CD8-positive, alpha-beta T cell (primary cell): ENCODE measurements at regions of chr11 and their contacts with region 1.

Region 1: GRCh38 chr11:46700241-46701077 is at the starts of genes ARHGAP1 and ZNF408:
- DNase-seq: peak; percentile 98 to 100 (median 99)
- ATAC-seq: peak; percentile 97
- H3K4me3 ChIP-seq: peak within 1 kb of the TSS; percentile 79 to 92
- H3K4me3 Mint-ChIP-seq: peak within 1 kb of the TSS; percentile 99
- H3K27ac ChIP-seq: peak within 1 kb of the TSS; percentile 73 to 82
- H3K27ac Mint-ChIP-seq: peak within 1 kb of the TSS; percentile 96
- H3K4me1 ChIP-seq: peaks cover 57% of the 10 kb centered on the region
- H3K4me1 Mint-ChIP-seq: peaks cover 53% of the 10 kb centered on the region
- H3K27me3 ChIP-seq: no peaks in the 10 kb centered on the region
- H3K27me3 Mint-ChIP-seq: no peaks in the 10 kb centered on the region
- CTCF ChIP-seq: no peak
- total RNA-seq, gene ARHGAP1: 33.4 to 36.9 TPM
- total RNA-seq, gene ZNF408: 24.0 to 24.3 TPM

Region 2: DNA sequence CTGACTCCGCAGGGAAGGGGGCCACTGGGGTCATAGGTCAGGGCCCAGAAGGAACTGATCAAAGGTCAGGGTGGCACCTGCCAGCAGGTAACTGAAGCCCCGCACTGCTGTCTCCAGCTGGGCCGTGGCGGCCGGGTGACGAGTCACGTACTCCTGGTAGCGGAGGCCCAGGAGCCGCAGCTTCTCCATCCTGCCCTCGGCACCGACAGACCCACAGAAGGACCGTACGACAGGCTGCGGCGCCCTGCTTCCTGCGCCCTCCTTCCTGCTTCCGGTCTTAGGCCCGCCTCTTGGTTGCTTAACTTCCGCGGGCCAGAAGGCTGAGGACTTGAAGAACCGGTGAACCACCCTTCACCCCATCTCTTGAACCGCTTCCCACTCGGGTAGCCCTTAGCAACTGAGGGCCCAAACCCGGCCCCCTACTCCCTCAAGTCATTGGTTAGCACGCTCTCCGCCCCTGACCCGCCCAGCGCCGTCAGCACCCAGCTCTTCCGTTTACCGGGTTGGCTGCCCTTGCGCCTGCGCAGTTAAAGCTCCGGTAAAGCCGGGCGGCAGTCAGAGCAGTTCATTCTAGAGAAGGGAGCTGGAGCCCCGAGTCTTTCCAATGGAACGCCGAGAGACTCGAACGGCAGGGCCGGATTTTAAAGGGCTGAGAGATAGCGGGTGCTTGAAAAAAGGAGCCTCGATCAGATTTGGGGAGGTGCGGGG is 782.7 kb before region 1 on chr11 and contains the start of gene PEX16:
- CTCF ChIA-PET with region 1: no interaction called
- POLR2A ChIA-PET with region 1: no interaction called
- intact Hi-C with region 1: loop called in 1 of 2 experiments (anchors 5 kb)
- DNase-seq: peak; percentile 90 to 99 (median 94)
- ATAC-seq: peak; percentile 90
- H3K4me3 ChIP-seq: peak within 1 kb of the TSS; percentile 94 to 98
- H3K4me3 Mint-ChIP-seq: peak within 1 kb of the TSS; percentile 91
- H3K27ac ChIP-seq: peak within 1 kb of the TSS; percentile 91 to 94
- H3K27ac Mint-ChIP-seq: peak within 1 kb of the TSS; percentile 96
- H3K4me1 ChIP-seq: peaks cover 26% of the 10 kb centered on the region
- H3K4me1 Mint-ChIP-seq: peaks cover 49% of the 10 kb centered on the region
- H3K27me3 ChIP-seq: no peaks in the 10 kb centered on the region
- H3K27me3 Mint-ChIP-seq: peaks cover 2% of the 10 kb centered on the region
- CTCF ChIP-seq: no peak
- total RNA-seq, gene PEX16: 51.5 to 55.6 TPM

Region 3: DNA sequence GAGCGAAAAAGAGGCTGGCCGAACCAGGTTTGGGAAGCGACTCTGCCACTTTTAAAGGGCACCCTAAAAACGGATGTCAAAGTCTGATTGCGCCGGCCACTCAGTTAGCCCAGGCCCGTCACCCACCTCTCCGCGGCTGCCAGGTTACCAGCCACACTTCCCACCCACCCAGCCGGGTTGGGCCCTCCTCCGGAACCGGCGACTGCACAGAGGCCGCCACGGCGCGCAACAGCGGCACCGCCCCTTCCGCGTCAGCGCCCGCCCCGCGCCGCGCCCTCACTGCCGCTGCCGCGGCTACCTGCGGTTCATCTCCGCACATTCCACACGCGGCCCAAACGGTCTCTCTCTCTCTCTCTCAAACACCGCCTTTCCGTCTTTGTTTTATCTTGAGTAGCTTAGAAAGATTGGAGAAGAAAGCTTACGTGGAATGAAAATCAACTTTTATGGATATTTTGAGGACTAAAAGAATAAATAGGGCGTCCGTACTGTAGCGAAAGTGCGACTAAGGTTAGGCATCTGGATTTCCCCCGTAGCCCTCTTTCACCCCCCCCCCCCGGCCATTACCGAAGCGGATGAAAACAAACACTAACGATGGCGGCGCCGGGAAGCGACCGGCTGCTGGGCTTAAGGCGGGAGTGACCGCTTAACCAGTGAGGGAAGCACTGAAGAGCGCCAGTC is 83.3 kb before region 1 on chr11 and contains the starts of genes ATG13 and HARBI1:
- CTCF ChIA-PET with region 1: no interaction called
- POLR2A ChIA-PET with region 1: interaction called, 4 read pairs
- intact Hi-C with region 1: loop called (anchors 1 kb)
- DNase-seq: peak; percentile 81 to 96 (median 92)
- ATAC-seq: peak; percentile 91
- H3K4me3 ChIP-seq: peak within 1 kb of the TSS; percentile 84 to 95
- H3K4me3 Mint-ChIP-seq: peak within 1 kb of the TSS; percentile 95
- H3K27ac ChIP-seq: peak within 1 kb of the TSS; percentile 96 to 98
- H3K27ac Mint-ChIP-seq: peak within 1 kb of the TSS; percentile 98
- H3K4me1 ChIP-seq: peaks cover 19% of the 10 kb centered on the region
- H3K4me1 Mint-ChIP-seq: peaks cover 42% of the 10 kb centered on the region
- H3K27me3 ChIP-seq: no peaks in the 10 kb centered on the region
- H3K27me3 Mint-ChIP-seq: no peaks in the 10 kb centered on the region
- CTCF ChIP-seq: no peak
- total RNA-seq, gene ATG13: 117 to 137 TPM
- total RNA-seq, gene HARBI1: 18.1 to 19.1 TPM

Region 4: DNA sequence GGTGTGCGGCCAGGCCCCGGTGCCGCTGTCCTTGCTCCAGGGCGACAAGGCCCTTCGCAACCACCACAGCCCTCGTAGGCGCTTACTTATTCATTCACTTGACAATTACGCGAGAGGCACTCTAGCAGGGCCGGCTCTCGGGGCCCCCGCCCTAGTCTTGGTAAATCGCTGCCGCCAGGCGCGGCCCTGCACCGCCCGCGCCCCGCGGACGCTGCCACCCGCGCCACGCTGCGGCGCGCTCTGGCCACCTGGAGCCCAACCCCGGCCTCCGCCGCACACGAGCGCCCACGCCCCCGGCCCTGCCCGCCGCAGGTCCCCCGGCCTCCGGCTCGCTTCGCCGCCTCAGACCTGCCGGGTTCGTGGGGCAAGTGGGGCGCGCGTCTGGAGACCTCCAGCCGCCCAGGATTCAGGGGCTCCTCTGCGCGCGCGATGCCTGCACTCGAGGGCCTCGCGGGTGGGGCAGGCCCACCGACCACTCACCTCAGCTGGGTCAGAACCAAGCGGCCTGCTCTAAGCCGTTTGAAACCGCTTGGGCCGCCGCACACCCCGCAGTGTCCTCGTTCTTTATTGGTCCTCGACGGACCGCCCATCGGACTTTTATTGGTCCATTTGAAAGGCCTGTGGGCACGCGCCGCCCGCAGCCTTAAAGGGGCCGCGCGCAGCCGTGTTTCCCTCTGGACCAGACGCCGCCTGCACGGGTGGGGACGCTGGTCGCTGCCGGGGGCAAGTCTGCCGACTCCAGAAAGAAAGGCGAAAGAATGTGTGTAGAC is 145.5 kb after region 1 on chr11 and contains the start of gene CKAP5:
- CTCF ChIA-PET with region 1: no interaction called
- POLR2A ChIA-PET with region 1: no interaction called
- intact Hi-C with region 1: loop called in 1 of 2 experiments (anchors 5 kb)
- DNase-seq: peak; percentile 68 to 91 (median 84)
- ATAC-seq: peak; percentile 91
- H3K4me3 ChIP-seq: peak within 1 kb of the TSS; percentile 75 to 85
- H3K4me3 Mint-ChIP-seq: peak within 1 kb of the TSS; percentile 98
- H3K27ac ChIP-seq: peak within 1 kb of the TSS; percentile 64 to 69
- H3K27ac Mint-ChIP-seq: peak within 1 kb of the TSS; percentile 95
- H3K4me1 ChIP-seq: peaks cover 13% of the 10 kb centered on the region
- H3K4me1 Mint-ChIP-seq: peaks cover 37% of the 10 kb centered on the region
- H3K27me3 ChIP-seq: no peaks in the 10 kb centered on the region
- H3K27me3 Mint-ChIP-seq: no peaks in the 10 kb centered on the region
- CTCF ChIP-seq: no peak
- total RNA-seq, gene CKAP5: 18.8 to 22.1 TPM

Region 5: GRCh38 chr11:47407746-47408590 is 707.5 kb after region 1 on chr11 and contains the start of gene SLC39A13:
- CTCF ChIA-PET with region 1: no interaction called
- POLR2A ChIA-PET with region 1: no interaction called
- intact Hi-C with region 1: loop called in 1 of 2 experiments (anchors 2 kb)
- DNase-seq: peak; percentile 77 to 97 (median 90)
- ATAC-seq: peak; percentile 88
- H3K4me3 ChIP-seq: peak within 1 kb of the TSS; percentile 70 to 85
- H3K4me3 Mint-ChIP-seq: peak within 1 kb of the TSS; percentile 93
- H3K27ac ChIP-seq: peak within 1 kb of the TSS; percentile 64 to 87
- H3K27ac Mint-ChIP-seq: peak within 1 kb of the TSS; percentile 96
- H3K4me1 ChIP-seq: peaks cover 18% of the 10 kb centered on the region
- H3K4me1 Mint-ChIP-seq: peaks cover 25% of the 10 kb centered on the region
- H3K27me3 ChIP-seq: no peaks in the 10 kb centered on the region
- H3K27me3 Mint-ChIP-seq: no peaks in the 10 kb centered on the region
- CTCF ChIP-seq: peak; percentile 89
- total RNA-seq, gene SLC39A13: 34.0 to 34.6 TPM

Region 6: GRCh38 chr11:47766305-47767227 is 1066.1 kb after region 1 on chr11:
- CTCF ChIA-PET with region 1: no interaction called
- POLR2A ChIA-PET with region 1: interaction called, 4 read pairs
- intact Hi-C with region 1: loop called in 1 of 2 experiments (anchors 5 kb)
- DNase-seq: peak; percentile 48 to 90 (median 74)
- ATAC-seq: peak; percentile 33
- H3K4me3 ChIP-seq: peak overlapping the region; percentile 75 to 79
- H3K4me3 Mint-ChIP-seq: peak overlapping the region; percentile 94
- H3K27ac ChIP-seq: peak overlapping the region; percentile 91 to 97
- H3K27ac Mint-ChIP-seq: peak overlapping the region; percentile 100
- H3K4me1 ChIP-seq: peaks cover 29% of the 10 kb centered on the region
- H3K4me1 Mint-ChIP-seq: peaks cover 31% of the 10 kb centered on the region
- H3K27me3 ChIP-seq: no peaks in the 10 kb centered on the region
- H3K27me3 Mint-ChIP-seq: no peaks in the 10 kb centered on the region
- CTCF ChIP-seq: no peak